ENCODE measurements at regions of chr11 and their contacts with region 1.

Region 1: GRCh38 chr11:67265633-67266423 is 445 bp upstream of the GRK2 start:
- DNase-seq: peak in 1 of 2 donors; percentile 85
- H3K4me3 ChIP-seq: peak overlapping the region; percentile 23 to 39
- H3K27ac ChIP-seq: peak overlapping the region; percentile 73 to 80
- H3K4me1 ChIP-seq: peaks cover 39 to 41% of the 10 kb centered on the region in 2 donors
- H3K27me3 ChIP-seq: no peaks in the 10 kb centered on the region
- CTCF ChIP-seq: peak; percentile 61 to 95 (median 72)

Region 2: GRCh38 chr11:67178878-67179277 is 87.0 kb before region 1 on chr11:
- intact Hi-C with region 1: no loop called
- DNase-seq: no peak
- H3K4me3 ChIP-seq: no peak overlapping the region
- H3K27ac ChIP-seq: no peak overlapping the region
- H3K4me1 ChIP-seq: no peaks in the 10 kb centered on the region
- H3K27me3 ChIP-seq: no peaks in the 10 kb centered on the region
- CTCF ChIP-seq: no peak

Region 3: GRCh38 chr11:67303132-67303834 is 37.5 kb after region 1 on chr11 and contains the start of gene SSH3:
- intact Hi-C with region 1: loop called (anchors 1 kb)
- DNase-seq: peak in 1 of 2 donors; percentile 88
- H3K4me3 ChIP-seq: peak within 1 kb of the TSS; percentile 76 to 97
- H3K27ac ChIP-seq: peak within 1 kb of the TSS; percentile 68 to 72
- H3K4me1 ChIP-seq: peaks cover 9 to 18% of the 10 kb centered on the region in 2 donors
- H3K27me3 ChIP-seq: no peaks in the 10 kb centered on the region
- CTCF ChIP-seq: no peak
- total RNA-seq, gene SSH3: 30.9 TPM

Region 4: DNA sequence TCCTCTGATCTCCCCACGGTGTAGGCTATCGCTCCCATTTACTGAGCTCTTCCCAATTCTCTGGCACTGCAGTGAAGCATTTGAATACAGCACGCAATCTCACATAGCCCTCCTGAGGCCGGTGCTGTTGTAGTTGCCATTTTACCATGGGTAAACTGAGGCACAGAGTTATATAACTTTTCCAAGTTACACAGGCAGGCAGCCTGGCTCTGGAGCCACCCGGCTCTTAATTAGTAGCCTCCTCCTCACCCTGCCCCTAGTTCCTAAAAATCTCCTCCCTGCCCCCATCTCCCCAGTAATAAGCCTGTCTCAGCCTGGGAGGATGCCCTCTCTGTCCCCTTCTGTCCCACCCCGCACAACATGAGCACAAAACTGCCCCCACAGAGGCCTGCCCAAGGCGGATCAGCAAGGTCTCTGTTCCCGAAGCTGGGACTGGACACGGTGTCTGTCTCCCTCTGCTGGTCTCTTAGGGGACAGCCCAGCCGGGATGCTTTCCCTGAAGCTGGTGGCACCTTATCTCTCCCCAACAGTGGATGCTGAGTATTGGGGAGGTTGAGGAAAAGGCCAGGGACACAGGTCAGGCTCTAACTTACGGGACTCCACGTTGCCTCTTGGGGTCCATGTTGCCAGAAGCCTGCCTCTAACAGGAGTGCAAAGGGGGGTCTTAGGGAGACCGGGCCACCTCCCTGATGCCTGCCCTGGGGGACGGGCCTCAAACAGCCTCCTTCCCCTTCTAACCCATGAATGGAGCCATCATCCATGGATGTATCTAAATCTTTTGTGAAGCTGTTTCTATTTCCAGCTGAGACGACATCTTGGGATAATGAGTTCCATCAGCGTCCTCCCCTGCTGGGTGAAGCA is 116.7 kb after region 1 on chr11:
- intact Hi-C with region 1: loop called (anchors 2 kb)
- DNase-seq: peak in 1 of 2 donors; percentile 90
- H3K4me3 ChIP-seq: no peak overlapping the region
- H3K27ac ChIP-seq: no peak overlapping the region
- H3K4me1 ChIP-seq: peaks cover 0 to 12% of the 10 kb centered on the region in 2 donors
- H3K27me3 ChIP-seq: no peaks in the 10 kb centered on the region
- CTCF ChIP-seq: peak; percentile 96 to 99 (median 97)

Measured in ascending aorta (tissue), 2 donors.